Vagina (tissue), 2 donors: ENCODE measurements at regions of chr14 and their contacts with region 1.

Region 1: DNA sequence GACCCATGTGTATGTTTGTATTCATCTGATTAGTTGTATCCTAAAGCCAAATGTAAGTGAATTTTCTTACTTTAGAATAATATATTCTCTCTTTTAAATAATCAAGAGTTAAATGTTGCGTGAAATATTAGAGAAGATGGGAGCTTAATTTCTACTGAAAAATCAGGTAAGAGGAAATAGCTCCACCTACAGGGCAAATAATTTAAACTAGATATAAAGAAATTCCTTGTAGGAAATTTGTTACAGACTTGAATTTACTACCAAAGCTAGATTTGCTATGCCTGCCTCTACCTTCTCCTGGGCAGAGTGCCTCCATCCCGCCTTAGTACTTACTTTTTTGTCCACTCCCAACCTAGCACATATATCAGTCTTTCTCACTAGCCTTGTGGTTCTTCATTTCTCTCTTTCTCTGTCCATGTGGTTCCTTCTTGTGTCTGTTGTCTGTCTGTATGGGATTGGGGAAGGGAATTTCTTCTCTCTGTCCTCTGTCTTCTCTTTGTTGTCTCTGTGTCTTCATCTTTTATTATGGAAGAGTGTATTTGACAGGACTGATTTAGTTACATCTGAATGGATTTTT is 44.7 kb downstream of the PALS1 start:
- DNase-seq: no peak
- H3K4me3 ChIP-seq: no peak overlapping the region
- H3K27ac ChIP-seq: no peak overlapping the region
- H3K4me1 ChIP-seq: no peaks in the 10 kb centered on the region
- H3K27me3 ChIP-seq: no peaks in the 10 kb centered on the region
- CTCF ChIP-seq: peak in 2 of 3 experiments; percentile 35 to 60
- POLR2A ChIP-seq: no peak

Region 2: GRCh38 chr14:67162384-67162783 is 123.6 kb before region 1 on chr14:
- intact Hi-C with region 1: loop called (anchors 5 kb)
- DNase-seq: no peak
- H3K4me3 ChIP-seq: no peak overlapping the region
- H3K27ac ChIP-seq: no peak overlapping the region
- H3K4me1 ChIP-seq: no peaks in the 10 kb centered on the region
- H3K27me3 ChIP-seq: no peaks in the 10 kb centered on the region
- CTCF ChIP-seq: no peak
- POLR2A ChIP-seq: no peak

Region 3: GRCh38 chr14:67263499-67264149 is 22.3 kb before region 1 on chr14:
- intact Hi-C with region 1: no loop called
- DNase-seq: no peak
- H3K4me3 ChIP-seq: no peak overlapping the region
- H3K27ac ChIP-seq: no peak overlapping the region
- H3K4me1 ChIP-seq: peaks cover 29% of the 10 kb centered on the region
- H3K27me3 ChIP-seq: no peaks in the 10 kb centered on the region
- CTCF ChIP-seq: no peak
- POLR2A ChIP-seq: no peak

Region 4: DNA sequence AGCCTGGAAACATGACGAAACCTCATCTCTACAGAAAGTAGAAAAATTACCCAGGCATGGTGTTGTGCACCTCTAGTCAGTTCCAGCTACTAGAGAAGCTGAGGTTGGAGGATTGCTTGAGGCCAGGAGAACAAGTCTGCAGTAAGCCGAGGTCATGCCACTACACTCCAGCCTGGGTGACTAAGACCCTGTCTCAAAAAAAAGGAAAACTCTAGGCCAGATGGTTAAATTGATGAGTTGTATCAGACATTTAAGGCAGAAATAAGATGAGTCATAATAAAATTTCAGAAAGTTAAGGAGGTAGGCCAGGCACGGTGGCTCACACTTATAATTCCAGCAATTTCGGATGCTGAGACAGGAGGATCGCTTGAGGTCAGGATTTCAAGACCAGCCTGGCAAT is 84.9 kb after region 1 on chr14:
- intact Hi-C with region 1: no loop called
- DNase-seq: no peak
- H3K4me3 ChIP-seq: no peak overlapping the region
- H3K27ac ChIP-seq: no peak overlapping the region
- H3K4me1 ChIP-seq: no peaks in the 10 kb centered on the region
- H3K27me3 ChIP-seq: no peaks in the 10 kb centered on the region
- CTCF ChIP-seq: no peak
- POLR2A ChIP-seq: no peak